IMR-90 (cell line): ENCODE measurements at regions of chr6 and their contacts with region 1.

Region 1: DNA sequence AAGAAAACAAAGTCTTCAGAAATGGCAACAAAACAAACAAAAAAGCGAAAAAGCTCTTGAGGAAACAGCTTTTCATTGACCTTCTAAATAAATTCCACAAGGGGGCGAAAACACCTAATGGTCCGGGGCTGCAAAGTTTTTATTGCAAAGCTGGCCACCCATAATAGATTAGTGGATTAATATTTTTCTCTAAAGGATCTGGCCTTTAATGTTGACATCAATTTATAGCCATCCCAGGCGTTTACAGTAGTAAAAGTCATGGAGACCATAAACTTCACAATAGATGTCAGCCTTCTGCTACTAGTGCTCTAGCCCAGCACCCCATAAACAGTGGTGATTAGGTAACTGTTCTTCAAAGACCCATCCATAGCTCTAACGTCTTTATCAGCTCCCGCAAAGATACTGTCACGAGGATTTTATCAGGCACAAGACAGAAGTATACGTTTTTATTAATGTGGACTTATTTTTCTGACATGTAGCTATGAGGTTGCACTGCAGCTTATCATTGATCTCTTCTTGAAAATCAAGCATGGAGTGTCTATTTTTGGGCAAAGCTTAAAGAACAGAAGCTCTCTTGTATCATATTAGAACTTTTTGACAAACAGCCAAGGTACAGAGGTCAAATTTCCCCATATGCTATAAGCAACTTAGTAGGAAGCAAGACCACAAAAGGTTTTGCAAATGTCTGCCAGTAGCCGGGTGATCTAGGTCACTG is 4.7 kb downstream of the CITED2 start:
- DNase-seq: peak; percentile 80
- ATAC-seq: 0 out of 2 replicates have a peak, but pooled peaks have one; percentile 2
- H3K4me3 ChIP-seq: no peak overlapping the region
- H3K27ac ChIP-seq: no peak overlapping the region
- H3K4me1 ChIP-seq: peaks cover 7% of the 10 kb centered on the region
- H3K27me3 ChIP-seq: no peaks in the 10 kb centered on the region
- CTCF ChIP-seq: peak; percentile 76
- POLR2A ChIP-seq: 0 out of 2 replicates have a peak, but pooled peaks have one; percentile 33
- RAD21 ChIP-seq: peak; percentile 89

Region 2: DNA sequence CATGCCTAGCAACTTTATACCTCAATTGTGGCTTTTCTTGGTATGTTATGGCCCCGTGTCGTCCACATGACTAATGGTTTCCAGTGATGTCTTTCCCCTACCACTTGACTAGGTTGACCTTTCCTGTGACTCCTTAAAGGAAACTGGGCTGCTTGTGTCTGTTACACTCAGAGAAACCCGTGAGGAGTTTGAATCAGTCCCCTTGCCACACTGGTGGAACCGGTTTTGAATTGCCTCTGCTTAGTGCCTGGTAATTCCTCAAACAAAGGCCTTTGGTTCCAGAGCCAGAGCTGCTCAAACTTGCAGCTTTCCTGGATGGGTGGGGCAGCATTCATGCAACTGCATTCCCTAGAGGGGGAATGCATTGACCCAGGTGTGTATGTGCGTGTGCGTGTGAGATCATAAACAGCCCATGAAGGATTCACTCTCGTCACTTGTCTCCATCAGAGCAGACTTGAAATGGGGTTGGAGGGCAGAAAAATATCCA is 551.9 kb before region 1 on chr6:
- CTCF ChIA-PET with region 1: no interaction called
- POLR2A ChIA-PET with region 1: no interaction called
- dilution Hi-C with region 1: no loop called
- in situ Hi-C with region 1: loop called (anchors 5 kb)
- intact Hi-C with region 1: loop called (anchors 1 kb)
- DNase-seq: peak; percentile 81
- ATAC-seq: peak; percentile 26; the same call in 1 of the 2 replicates
- H3K4me3 ChIP-seq: no peak overlapping the region
- H3K27ac ChIP-seq: no peak overlapping the region
- H3K4me1 ChIP-seq: peaks cover 4% of the 10 kb centered on the region
- H3K27me3 ChIP-seq: no peaks in the 10 kb centered on the region
- CTCF ChIP-seq: no peak
- POLR2A ChIP-seq: no peak
- RAD21 ChIP-seq: no peak

Region 3: DNA sequence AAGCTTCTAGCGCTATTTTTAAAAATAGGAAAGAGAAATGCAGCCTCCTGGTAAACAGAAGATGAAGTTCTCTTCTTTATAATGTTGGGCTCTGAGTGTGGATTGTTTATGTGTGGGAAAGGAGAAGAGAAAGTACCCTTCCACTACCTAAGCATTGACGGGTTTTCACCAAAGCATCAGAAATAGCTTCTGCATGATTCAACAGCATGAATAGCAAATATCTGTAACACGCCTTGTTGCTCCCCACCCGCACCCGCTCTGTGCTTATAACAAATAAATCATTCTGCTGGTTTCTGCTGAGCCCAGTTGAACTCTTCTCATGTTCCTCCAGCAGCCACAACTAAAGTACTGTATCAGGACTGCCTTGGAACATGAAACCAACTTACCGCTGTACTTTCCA is 98.7 kb before region 1 on chr6:
- CTCF ChIA-PET with region 1: no interaction called
- POLR2A ChIA-PET with region 1: no interaction called
- dilution Hi-C with region 1: no loop called
- in situ Hi-C with region 1: no loop called
- intact Hi-C with region 1: no loop called
- DNase-seq: peak; percentile 77
- ATAC-seq: peak; percentile 73
- H3K4me3 ChIP-seq: no peak overlapping the region
- H3K27ac ChIP-seq: no peak overlapping the region
- H3K4me1 ChIP-seq: no peaks in the 10 kb centered on the region
- H3K27me3 ChIP-seq: no peaks in the 10 kb centered on the region
- CTCF ChIP-seq: no peak
- POLR2A ChIP-seq: no peak
- RAD21 ChIP-seq: no peak

Region 4: DNA sequence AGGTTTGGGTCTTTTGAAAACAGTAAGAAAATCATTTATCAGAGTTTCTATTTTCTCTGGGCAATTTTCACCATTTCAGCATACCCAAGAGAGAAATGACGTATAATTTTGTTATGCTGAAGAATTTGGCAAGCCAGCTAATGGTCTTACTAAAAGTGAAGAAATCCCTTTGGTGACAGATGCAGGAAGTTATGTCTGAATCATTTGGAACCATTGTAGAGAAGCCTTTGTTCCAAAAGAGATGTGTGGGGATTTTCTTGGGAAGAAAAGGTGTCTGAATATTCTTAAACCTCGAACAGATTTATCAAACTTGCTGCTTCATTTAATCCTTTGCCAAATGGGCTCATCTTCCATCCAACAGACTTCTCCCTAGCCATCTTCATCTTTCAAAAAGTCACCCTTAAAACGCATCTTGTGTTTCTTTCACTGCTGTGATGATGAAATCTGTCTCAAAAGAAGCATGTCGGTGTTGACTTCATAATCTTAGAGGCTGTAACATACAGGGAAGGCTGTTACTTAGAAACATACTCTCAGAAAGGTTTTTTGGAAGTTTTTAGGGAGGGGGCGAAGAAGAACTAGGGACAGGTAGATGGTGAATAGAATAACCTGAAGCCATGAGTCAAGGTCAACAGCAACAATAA is 34.8 kb before region 1 on chr6:
- CTCF ChIA-PET with region 1: no interaction called
- POLR2A ChIA-PET with region 1: no interaction called
- dilution Hi-C with region 1: no loop called
- in situ Hi-C with region 1: no loop called
- intact Hi-C with region 1: no loop called
- DNase-seq: peak; percentile 95
- ATAC-seq: peak; percentile 71
- H3K4me3 ChIP-seq: no peak overlapping the region
- H3K27ac ChIP-seq: no peak overlapping the region
- H3K4me1 ChIP-seq: peaks cover 6% of the 10 kb centered on the region
- H3K27me3 ChIP-seq: no peaks in the 10 kb centered on the region
- CTCF ChIP-seq: no peak
- POLR2A ChIP-seq: no peak
- RAD21 ChIP-seq: no peak

Region 5: DNA sequence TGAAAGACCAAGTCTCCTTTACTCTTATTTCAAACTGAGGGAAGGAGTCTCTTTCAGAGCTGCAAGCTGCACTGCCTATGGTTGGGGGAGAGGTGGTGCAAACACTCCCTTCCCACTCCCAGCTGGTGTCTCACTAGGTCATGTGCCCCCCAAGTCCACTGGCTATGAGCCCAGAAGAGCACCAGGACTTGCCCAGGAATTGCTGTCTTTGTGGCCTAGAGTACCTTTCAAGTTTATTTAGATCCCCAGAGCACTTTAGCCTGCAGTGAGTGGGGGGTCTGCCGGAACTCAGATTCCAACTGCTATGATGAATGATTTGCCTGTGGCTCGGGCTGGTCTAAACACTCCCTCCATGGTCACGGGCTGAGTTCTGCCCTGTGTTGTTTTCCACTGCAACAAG is 197.4 kb after region 1 on chr6:
- CTCF ChIA-PET with region 1: interaction called, 14 read pairs
- POLR2A ChIA-PET with region 1: interaction called, 4 read pairs
- dilution Hi-C with region 1: no loop called
- in situ Hi-C with region 1: no loop called
- intact Hi-C with region 1: no loop called
- DNase-seq: no peak
- ATAC-seq: no peak
- H3K4me3 ChIP-seq: no peak overlapping the region
- H3K27ac ChIP-seq: no peak overlapping the region
- H3K4me1 ChIP-seq: peaks cover 9% of the 10 kb centered on the region
- H3K27me3 ChIP-seq: no peaks in the 10 kb centered on the region
- CTCF ChIP-seq: no peak
- POLR2A ChIP-seq: no peak
- RAD21 ChIP-seq: no peak

Region 6: GRCh38 chr6:139881728-139882211 is 512.0 kb after region 1 on chr6:
- CTCF ChIA-PET with region 1: interaction called, 3 read pairs
- POLR2A ChIA-PET with region 1: interaction called, 3 read pairs
- dilution Hi-C with region 1: no loop called
- in situ Hi-C with region 1: no loop called
- intact Hi-C with region 1: loop called (anchors 2 kb)
- DNase-seq: peak; percentile 53
- ATAC-seq: peak; percentile 76
- H3K4me3 ChIP-seq: peak overlapping the region; percentile 31; the same call in 1 of the 2 replicates
- H3K27ac ChIP-seq: peak overlapping the region; percentile 60
- H3K4me1 ChIP-seq: peaks cover 13% of the 10 kb centered on the region
- H3K27me3 ChIP-seq: no peaks in the 10 kb centered on the region
- CTCF ChIP-seq: peak; percentile 43
- POLR2A ChIP-seq: no peak
- RAD21 ChIP-seq: peak; percentile 54

Region 7: DNA sequence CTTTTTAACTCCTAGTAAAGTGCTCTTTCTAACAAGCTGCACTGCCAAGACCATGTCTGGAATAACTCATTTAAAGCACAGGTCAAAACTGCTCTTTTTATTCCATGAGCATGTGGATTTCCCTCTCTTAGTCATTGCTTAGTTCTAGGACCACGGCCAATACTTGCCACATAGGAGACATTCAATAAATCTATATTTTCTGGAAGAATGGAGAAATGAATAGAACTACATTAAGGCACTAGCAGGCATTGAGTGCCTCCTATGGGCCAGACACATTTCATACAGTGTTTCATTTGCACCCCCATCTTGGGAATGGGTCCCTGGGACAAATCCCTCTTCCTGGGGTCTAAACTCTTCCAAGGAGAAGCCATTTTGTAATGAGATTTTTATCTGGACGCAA is 557.5 kb after region 1 on chr6:
- CTCF ChIA-PET with region 1: no interaction called
- POLR2A ChIA-PET with region 1: interaction called, 3 read pairs
- dilution Hi-C with region 1: no loop called
- in situ Hi-C with region 1: no loop called
- intact Hi-C with region 1: loop called (anchors 1 kb)
- DNase-seq: peak; percentile 93
- ATAC-seq: peak; percentile 48
- H3K4me3 ChIP-seq: no peak overlapping the region
- H3K27ac ChIP-seq: no peak overlapping the region
- H3K4me1 ChIP-seq: peaks cover 7% of the 10 kb centered on the region
- H3K27me3 ChIP-seq: no peaks in the 10 kb centered on the region
- CTCF ChIP-seq: peak; percentile 60
- POLR2A ChIP-seq: no peak
- RAD21 ChIP-seq: peak; percentile 68

Region 8: GRCh38 chr6:140441256-140441655 is 1071.5 kb after region 1 on chr6:
- CTCF ChIA-PET with region 1: no interaction called
- POLR2A ChIA-PET with region 1: no interaction called
- dilution Hi-C with region 1: no loop called
- in situ Hi-C with region 1: loop called (anchors 10 kb)
- intact Hi-C with region 1: loop called (anchors 1 kb)
- DNase-seq: peak; percentile 63
- ATAC-seq: peak; percentile 62
- H3K4me3 ChIP-seq: no peak overlapping the region
- H3K27ac ChIP-seq: peak overlapping the region; percentile 4; the same call in 1 of the 2 replicates
- H3K4me1 ChIP-seq: peaks cover 13% of the 10 kb centered on the region; the same call in 1 of the 2 replicates
- H3K27me3 ChIP-seq: no peaks in the 10 kb centered on the region
- CTCF ChIP-seq: peak; percentile 57
- POLR2A ChIP-seq: no peak
- RAD21 ChIP-seq: peak; percentile 72

Region 9: DNA sequence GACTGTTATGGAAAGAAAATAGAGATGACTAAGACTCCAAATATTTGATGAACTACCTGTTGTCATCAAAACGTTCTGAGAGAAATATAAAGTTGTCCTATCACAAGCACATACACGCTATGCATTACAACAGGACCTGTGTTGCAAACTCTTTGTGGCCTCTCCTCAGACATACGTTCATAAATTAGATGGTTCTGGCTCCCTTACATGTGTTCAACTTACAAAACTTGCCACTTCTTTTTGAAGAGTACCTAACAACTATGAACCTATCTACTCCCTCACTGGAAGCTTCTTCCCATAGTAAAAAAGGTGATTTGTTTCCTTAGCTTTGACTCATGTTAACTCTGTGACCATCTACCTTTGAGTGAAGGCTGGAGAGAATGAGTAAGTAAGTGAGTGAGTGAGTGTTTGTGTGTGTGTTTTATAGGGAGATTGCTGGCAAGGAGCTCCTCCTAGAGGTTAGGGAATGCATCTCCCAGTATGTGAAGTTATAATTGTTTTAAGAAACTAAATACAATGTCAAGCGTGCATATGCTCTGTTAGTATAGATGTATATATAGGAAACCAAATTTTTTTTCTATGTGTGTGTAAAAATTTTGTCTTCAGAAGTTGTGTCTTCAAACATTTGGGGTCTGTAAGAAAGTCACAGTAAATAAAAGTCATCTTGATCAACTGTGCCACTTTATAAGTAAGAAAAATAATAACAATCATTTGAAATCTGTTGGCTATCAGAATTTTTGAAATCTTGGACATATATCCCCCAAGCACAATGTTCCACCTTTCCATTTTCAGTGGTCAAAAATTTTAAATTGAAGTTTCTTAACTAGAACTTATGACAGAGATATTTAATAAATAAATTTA is 1551.9 kb after region 1 on chr6:
- CTCF ChIA-PET with region 1: no interaction called
- POLR2A ChIA-PET with region 1: no interaction called
- dilution Hi-C with region 1: no loop called
- in situ Hi-C with region 1: loop called (anchors 25 kb)
- intact Hi-C with region 1: loop called (anchors 1 kb)
- DNase-seq: peak; percentile 86
- ATAC-seq: peak; percentile 77
- H3K4me3 ChIP-seq: no peak overlapping the region
- H3K27ac ChIP-seq: no peak overlapping the region
- H3K4me1 ChIP-seq: no peaks in the 10 kb centered on the region; the same call in 1 of the 2 replicates
- H3K27me3 ChIP-seq: no peaks in the 10 kb centered on the region
- CTCF ChIP-seq: peak; percentile 87
- POLR2A ChIP-seq: peak; percentile 34; the same call in 1 of the 2 replicates
- RAD21 ChIP-seq: peak; percentile 94